ENCODE measurements at regions of chr2 and their contacts with region 1.

Region 1: DNA sequence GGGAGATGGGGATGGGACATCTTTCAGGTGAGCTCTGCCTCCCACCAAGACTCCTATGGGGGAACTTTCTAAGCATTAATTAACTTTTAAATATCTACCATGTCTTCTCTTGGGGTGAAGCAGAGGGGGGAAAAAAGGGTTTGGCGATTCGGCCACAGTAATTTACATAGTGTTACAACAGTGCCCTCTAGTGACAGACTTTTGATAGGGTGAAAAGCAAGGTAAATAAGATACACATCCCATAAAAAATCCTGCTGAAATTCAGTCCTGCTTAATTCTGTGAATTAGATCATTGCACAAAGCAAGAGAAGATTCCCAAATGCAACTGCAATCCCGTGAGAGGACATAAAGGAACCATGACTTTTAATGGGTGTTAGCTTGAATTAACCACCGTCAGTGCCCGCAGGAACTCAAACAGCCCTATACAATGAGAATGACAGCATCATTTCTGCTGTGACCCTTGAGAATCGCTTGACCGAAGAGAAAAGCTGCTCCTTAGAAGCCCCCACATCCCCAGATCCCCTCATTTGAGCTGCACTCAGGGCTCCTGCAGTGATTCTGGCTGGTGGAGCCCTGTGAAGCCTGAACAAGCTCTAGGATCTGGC is 32.8 kb downstream of the FAM124B start:
- DNase-seq: no peak
- H3K4me3 ChIP-seq: no peak overlapping the region
- H3K27ac ChIP-seq: no peak overlapping the region
- H3K4me1 ChIP-seq: no peaks in the 10 kb centered on the region
- H3K27me3 ChIP-seq: no peaks in the 10 kb centered on the region
- CTCF ChIP-seq: peak in 3 of 4 experiments; percentile 38 to 65 (median 41)
- EP300 ChIP-seq: no peak
- POLR2A ChIP-seq: no peak

Region 2: DNA sequence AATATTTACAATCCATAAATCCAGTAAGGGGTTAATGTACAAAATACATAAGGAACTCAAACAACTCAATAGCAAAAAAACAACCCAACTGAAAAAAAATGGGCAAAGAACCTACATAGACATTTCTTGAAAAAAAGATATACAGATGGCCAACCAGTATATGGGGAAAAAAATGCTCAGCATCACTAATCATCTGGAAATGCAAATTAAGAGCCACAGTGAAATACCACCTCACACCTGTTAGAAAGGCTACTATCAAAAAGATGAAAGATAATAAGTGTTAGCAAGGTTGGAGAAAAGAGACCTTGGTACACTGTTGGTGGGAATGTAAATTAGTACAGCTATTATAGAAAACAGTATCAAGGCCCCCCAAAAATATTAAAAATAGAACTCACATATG is 546.3 kb before region 1 on chr2:
- intact Hi-C with region 1: no loop called
- DNase-seq: no peak
- H3K4me3 ChIP-seq: no peak overlapping the region
- H3K27ac ChIP-seq: no peak overlapping the region
- H3K4me1 ChIP-seq: no peaks in the 10 kb centered on the region
- H3K27me3 ChIP-seq: no peaks in the 10 kb centered on the region
- CTCF ChIP-seq: no peak
- EP300 ChIP-seq: no peak
- POLR2A ChIP-seq: no peak

Region 3: DNA sequence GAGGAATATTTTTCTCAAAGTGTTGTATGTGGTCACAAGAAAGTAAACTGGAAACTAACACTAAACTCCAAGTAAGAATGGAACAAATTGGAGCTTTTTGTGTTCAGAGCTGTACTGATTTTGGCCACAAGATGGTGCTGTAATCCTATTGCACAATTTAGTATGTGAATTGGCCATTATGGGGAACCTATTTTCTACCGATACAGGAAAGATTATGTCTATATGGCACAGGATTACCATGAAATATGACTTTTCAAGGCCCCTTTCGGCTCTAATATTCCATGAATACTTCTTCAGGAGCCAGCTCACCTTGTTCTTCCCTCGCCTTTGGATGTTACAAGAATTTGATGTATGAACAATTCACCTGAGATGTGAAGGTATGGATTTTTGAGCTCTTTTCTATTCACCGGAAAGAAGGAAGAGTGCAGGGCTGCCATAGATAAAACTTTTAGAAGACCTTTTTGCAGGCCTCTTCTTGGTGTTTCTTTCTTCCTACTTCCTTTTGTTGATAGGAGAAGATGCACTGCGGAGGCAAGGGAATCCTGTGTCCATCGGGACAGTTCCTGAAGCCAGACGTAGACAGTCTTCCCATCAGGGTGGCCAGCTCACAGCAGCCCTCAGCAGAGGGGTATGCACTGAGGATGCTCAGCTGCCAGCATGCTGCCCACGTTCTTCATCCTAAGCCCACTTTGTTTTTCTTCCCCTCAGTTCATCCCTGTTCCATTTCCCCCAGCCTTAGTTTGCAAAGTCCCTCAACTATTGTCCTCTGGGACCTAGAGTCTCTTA is 398.6 kb before region 1 on chr2:
- intact Hi-C with region 1: loop called (anchors 10 kb)
- DNase-seq: no peak
- H3K4me3 ChIP-seq: no peak overlapping the region
- H3K27ac ChIP-seq: no peak overlapping the region
- H3K4me1 ChIP-seq: no peaks in the 10 kb centered on the region
- H3K27me3 ChIP-seq: no peaks in the 10 kb centered on the region
- CTCF ChIP-seq: peak; percentile 44 to 92 (median 74)
- EP300 ChIP-seq: no peak
- POLR2A ChIP-seq: no peak

Measured in sigmoid colon (tissue), 7 donors.